Activated T-helper 1 cell treated with anti-CD3 and anti-CD28 coated beads, Interleukin-12 subunit alpha, Interleukin-12 subunit beta, Interleukin-2, Interleukin-4 antibody, amounts not matched to agents 30 ng/mL and 10 ng/mL and 1 ng/mL, durations not matched to agents 14 hours and 24 hours and 36 hours (primary cell): ENCODE measurements at regions of chr12 and their contacts with region 1.

Region 1: GRCh38 chr12:47812797-47813510 is 6.7 kb downstream of the HDAC7 start:
- DNase-seq: peak; percentile 92
- H3K4me3 Mint-ChIP-seq: peak overlapping the region; percentile 96
- H3K27ac Mint-ChIP-seq: peak overlapping the region; percentile 98
- H3K4me1 Mint-ChIP-seq: peaks cover 92% of the 10 kb centered on the region
- H3K27me3 Mint-ChIP-seq: no peaks in the 10 kb centered on the region

Region 2: GRCh38 chr12:46209914-46210872 is 1602.8 kb before region 1 on chr12:
- intact Hi-C with region 1: loop called (anchors 10 kb)
- DNase-seq: peak; percentile 31
- H3K4me3 Mint-ChIP-seq: peak overlapping the region; percentile 52
- H3K27ac Mint-ChIP-seq: peak overlapping the region; percentile 96
- H3K4me1 Mint-ChIP-seq: peaks cover 64% of the 10 kb centered on the region
- H3K27me3 Mint-ChIP-seq: no peaks in the 10 kb centered on the region

Region 3: GRCh38 chr12:47773062-47773857 is 39.7 kb before region 1 on chr12 and contains the start of gene SLC48A1:
- intact Hi-C with region 1: loop called (anchors 1 kb)
- DNase-seq: peak; percentile 73
- H3K4me3 Mint-ChIP-seq: peak within 1 kb of the TSS; percentile 90
- H3K27ac Mint-ChIP-seq: peak within 1 kb of the TSS; percentile 85
- H3K4me1 Mint-ChIP-seq: peaks cover 45% of the 10 kb centered on the region
- H3K27me3 Mint-ChIP-seq: peaks cover 7% of the 10 kb centered on the region
- total RNA-seq, gene SLC48A1: 12.7 TPM in 2 replicates

Region 4: GRCh38 chr12:47837190-47838171 is 24.5 kb after region 1 on chr12:
- intact Hi-C with region 1: loop called (anchors 1 kb)
- DNase-seq: peak; percentile 41
- H3K4me3 Mint-ChIP-seq: no peak overlapping the region
- H3K27ac Mint-ChIP-seq: peak overlapping the region; percentile 67
- H3K4me1 Mint-ChIP-seq: peaks cover 84% of the 10 kb centered on the region
- H3K27me3 Mint-ChIP-seq: no peaks in the 10 kb centered on the region

Region 5: GRCh38 chr12:48157018-48157888 is 344.3 kb after region 1 on chr12 and contains the start of gene ASB8:
- intact Hi-C with region 1: loop called (anchors 2 kb)
- DNase-seq: peak; percentile 98
- H3K4me3 Mint-ChIP-seq: peak within 1 kb of the TSS; percentile 94
- H3K27ac Mint-ChIP-seq: peak within 1 kb of the TSS; percentile 86
- H3K4me1 Mint-ChIP-seq: peaks cover 21% of the 10 kb centered on the region
- H3K27me3 Mint-ChIP-seq: no peaks in the 10 kb centered on the region
- total RNA-seq, gene ASB8: 33.3 and 36.1 TPM in 2 replicates